ENCODE measurements at regions of chr4 and their contacts with region 1.

Region 1: GRCh38 chr4:4541661-4542570 is at the start of gene STX18:
- DNase-seq: peak; percentile 94
- total RNA-seq, gene STX18: 17.2 TPM

Region 2: DNA sequence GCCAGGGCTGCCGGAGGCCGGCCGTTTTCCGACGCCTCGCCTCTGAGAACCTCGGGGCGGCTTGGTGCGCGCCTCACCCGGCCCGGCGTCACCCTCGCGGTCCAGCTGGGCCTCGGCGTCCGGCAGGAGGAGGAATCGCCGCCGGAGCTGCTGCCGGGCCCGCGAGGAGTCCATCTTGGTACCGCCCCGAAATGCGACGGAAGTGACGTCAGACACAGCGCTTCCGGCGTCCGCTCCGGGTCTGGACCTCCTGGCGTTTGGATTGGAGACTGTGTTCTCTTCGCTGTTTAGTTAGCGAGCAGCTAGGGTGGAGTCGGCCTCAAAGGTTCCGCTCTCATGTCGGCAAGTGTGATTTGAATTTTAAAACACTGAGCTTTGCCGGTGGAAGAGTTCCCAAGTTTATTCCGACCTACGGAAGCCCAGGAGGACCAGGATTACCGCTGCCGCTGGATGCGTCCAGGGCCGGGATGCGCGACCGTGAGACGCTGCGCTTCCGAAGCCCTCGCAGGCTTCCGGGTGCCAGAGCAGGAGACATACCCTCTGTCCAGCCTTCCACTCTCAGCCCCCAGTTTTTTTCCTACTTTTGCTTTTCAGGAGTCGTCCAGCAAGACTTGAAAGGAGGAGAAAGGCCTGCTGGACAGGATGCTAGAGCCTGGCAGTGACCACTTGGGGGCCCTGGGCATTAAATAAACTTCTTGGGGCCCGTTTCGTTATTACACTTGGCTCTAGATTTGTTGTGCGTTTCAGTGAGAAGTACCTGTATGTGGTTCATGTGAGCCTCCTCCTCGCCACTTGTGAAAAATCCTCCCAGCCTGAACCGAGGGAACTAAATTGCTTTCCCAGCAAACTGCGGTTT is 293.7 kb before region 1 on chr4 and contains the start of gene TMEM128:
- intact Hi-C with region 1: loop called (anchors 5 kb)
- DNase-seq: peak; percentile 98
- total RNA-seq, gene TMEM128: 12.4 TPM

Region 3: DNA sequence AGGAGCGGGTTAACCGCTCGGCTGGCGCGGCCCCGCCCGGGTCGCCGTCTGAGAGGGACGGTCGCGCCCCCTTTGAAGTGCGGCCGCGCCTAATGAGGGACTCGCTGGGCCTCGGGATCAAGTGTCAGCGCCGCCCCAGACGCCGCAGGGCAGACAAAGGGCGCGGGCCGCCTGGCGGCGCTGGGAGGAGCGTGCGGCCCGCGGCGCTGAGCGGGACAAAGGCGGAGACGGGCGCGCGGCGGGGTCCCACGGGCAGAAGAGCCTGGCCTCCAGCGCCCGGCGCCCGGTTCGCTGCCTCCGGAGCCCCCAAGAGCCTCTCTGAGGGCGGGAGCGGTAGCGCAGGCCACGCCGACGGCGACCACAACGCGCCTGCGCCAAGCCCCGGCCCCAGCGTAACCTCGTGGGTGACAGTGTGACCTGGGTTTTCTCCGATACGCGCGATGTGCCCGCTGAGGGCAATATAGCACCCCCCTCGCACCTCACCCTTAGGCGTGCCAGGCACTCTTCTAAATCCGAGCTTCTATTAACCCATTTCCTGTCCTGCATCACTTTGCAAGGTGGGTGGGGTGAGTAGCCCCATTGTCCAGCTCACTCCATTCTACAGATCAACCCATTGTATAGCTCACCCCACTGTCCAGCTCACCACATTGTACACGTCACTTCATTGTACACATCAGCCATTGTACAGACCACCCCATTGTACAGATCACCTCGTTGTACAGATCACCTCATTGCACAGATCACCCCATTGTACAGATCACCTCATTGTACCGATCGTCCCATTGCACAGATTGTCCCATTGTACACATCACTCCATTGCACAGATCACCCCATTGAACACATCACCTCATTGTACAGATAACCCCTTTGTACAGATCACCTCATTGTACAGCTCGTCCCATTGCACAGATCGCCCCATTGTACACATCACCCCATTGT is 33.6 kb after region 1 on chr4:
- intact Hi-C with region 1: loop called (anchors 2 kb)
- DNase-seq: peak; percentile 81